ENCODE measurements at regions of chrX and their contacts with region 1.

Region 1: DNA sequence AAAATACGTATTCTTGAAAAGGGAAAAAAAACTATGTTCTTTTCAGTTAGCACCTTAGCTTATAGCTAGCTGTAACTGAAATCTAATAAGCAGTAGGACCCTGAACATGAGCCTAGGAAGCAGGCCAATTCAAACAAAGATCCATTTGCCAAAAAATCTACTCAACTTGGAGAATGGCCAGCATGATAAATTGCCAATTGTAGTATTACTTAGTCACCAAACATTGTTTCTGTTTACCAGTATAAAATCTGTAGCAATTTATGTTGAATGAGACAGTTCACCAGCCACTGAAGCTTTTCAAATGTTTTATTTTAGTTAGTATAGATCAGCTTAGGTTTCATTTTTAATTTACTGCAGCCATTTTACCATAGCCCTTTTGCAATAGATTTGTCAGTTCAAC is 323.6 kb upstream of the DIPK2B start:
- DNase-seq: no peak
- H3K4me3 ChIP-seq: no peak overlapping the region
- H3K27ac ChIP-seq: no peak overlapping the region
- H3K4me1 ChIP-seq: no peaks in the 10 kb centered on the region
- H3K27me3 ChIP-seq: no peaks in the 10 kb centered on the region
- CTCF ChIP-seq: no peak

Region 2: GRCh38 chrX:45667666-45668065 is 143.4 kb after region 1 on chrX:
- intact Hi-C with region 1: no loop called
- DNase-seq: no peak
- H3K4me3 ChIP-seq: no peak overlapping the region
- H3K27ac ChIP-seq: no peak overlapping the region
- H3K4me1 ChIP-seq: no peaks in the 10 kb centered on the region
- H3K27me3 ChIP-seq: no peaks in the 10 kb centered on the region
- CTCF ChIP-seq: no peak

Region 3: DNA sequence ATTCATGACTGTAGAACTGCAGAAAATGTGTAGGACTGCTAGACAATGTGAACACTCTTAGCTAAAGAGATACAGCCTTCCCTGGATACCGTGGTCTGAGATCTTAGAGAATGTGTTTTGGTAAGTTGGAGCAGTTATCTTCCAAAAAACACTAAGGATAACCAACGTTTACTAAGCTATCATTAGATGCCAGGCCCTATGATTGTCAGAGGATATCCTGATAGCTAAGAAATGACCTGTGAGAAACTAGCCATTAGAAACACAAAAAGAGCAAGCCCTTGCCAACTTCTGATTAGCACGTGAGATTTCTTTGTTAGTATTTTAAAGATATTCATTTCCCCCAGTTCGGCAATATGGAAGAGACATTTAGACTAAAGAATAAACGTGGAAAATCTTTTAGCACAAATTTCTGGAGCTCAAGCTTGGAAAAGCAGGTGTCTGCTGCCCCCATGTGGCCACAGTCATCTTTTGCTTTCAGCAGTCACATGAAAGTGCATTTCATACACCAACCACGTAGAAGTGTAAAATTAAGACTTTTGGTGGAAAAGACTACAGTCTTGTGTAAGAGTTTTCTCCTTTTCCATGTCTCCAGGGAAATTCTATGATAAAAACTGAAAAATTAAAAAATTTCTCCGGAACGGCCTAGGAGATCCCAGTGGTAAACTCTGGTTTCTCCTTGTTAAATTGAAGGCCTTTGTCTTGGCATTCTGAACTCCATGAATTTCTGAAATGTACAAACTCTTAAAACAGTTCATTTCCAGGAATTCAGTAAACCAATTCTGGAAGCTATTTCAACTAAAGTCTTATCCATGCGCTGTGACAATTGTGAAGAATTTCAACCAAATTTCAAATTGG is 884.5 kb after region 1 on chrX:
- intact Hi-C with region 1: loop called (anchors 10 kb)
- DNase-seq: peak; percentile 75
- H3K4me3 ChIP-seq: no peak overlapping the region
- H3K27ac ChIP-seq: no peak overlapping the region
- H3K4me1 ChIP-seq: no peaks in the 10 kb centered on the region
- H3K27me3 ChIP-seq: no peaks in the 10 kb centered on the region
- CTCF ChIP-seq: peak; percentile 70

Measured in colonic mucosa (tissue), 4 donors.